Left ventricle myocardium inferior (tissue), 1 donor: ENCODE measurements at regions of chr22 and their contacts with region 1.

Region 1: DNA sequence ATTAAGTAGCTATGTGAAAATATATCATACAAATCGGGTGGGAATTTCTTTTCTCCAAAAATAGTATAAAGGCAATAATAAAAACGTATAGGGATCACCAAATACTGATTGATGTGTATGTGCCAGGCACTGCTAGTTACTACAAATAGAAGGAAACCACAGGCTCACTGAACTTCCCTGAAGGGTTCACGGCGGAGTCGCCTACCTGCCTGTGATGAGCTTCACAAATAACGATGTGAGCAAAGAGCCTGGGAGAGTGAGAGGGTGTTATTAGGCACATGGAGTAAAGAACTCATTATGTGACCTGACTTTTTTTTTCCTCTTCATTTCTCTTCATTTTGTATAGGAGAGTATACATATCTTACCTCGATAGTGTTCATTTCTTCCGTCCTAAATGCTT is 36.0 kb upstream of the L3MBTL2 start:
- DNase-seq: no peak
- H3K4me3 ChIP-seq: no peak overlapping the region
- H3K27ac ChIP-seq: no peak overlapping the region
- H3K4me1 ChIP-seq: peaks cover 6% of the 10 kb centered on the region
- H3K27me3 ChIP-seq: no peaks in the 10 kb centered on the region
- CTCF ChIP-seq: no peak

Region 2: GRCh38 chr22:40844951-40845350 is 324.2 kb before region 1 on chr22:
- intact Hi-C with region 1: loop called (anchors 10 kb)
- DNase-seq: no peak
- H3K4me3 ChIP-seq: no peak overlapping the region
- H3K27ac ChIP-seq: no peak overlapping the region
- H3K4me1 ChIP-seq: no peaks in the 10 kb centered on the region
- H3K27me3 ChIP-seq: no peaks in the 10 kb centered on the region
- CTCF ChIP-seq: no peak